ENCODE measurements at regions of chr20 and their contacts with region 1.

Region 1: GRCh38 chr20:55140631-55141030 is 665.2 kb downstream of the DOK5 start:
- DNase-seq: no peak
- ATAC-seq: no peak

Region 2: GRCh38 chr20:55191939-55192338 is 51.3 kb after region 1 on chr20:
- intact Hi-C with region 1: loop called in 1 of 2 experiments (anchors 10 kb)
- DNase-seq: no peak
- ATAC-seq: no peak

Measured in left colon (tissue), 2 donors.